ENCODE measurements at regions of chr7 and their contacts with region 1.

Region 1: DNA sequence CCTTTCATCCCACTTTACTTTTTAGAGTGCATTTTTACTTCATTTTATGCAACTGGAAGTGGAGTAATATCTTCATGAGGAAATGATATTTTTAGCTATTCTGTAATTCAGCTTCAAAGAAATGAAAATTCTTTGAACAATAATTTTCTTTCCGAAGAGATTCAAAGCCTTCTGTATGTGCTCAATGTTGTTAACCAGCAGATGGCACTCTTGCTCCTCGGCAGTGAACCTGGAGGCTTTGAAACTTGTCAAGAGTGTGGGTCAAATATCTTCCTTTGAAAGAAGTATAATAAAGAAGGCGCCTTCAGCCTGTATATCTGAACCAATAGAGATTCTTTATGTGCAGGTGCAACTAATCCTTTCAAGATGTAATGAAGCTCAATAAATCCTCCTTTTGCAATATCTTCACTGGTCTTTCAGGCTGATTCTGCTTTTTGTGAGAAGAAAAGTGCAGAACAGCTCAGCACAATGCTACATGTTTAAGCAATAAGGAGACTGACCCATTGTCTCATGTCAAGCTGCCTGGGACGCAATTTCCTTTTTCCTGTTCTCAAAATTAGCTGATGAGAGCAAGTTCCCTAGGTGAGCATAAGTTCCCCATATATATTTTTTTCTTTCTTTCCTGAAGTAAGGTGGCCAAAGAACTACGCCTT is 258.4 kb downstream of the SEMA3A start:
- DNase-seq: peak; percentile 58 to 81 (median 72)
- H3K4me3 ChIP-seq: no peak overlapping the region
- H3K27ac ChIP-seq: no peak overlapping the region
- H3K4me1 ChIP-seq: no peaks in the 10 kb centered on the region
- H3K27me3 ChIP-seq: no peaks in the 10 kb centered on the region

Region 2: DNA sequence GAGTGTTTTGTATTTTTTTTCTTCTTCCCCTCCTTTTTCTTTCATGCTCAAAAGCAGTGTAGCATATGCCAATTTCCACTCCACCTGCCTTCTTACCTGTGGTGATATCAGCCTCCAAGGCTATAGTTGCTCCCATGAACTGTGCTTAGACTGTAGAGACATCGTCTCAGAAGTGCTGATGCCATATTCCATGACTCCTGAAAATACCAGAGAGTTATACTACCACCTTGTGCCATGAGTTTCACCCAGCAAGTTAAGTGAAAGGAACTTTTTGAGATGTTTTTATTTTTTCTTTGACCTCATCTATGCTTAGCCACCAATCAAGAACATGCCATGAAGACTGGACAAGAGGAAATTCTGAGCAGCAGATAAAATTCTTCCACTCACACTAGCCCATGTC is 144.4 kb before region 1 on chr7:
- CTCF ChIA-PET with region 1: no interaction called
- POLR2A ChIA-PET with region 1: no interaction called
- DNase-seq: no peak
- H3K4me3 ChIP-seq: no peak overlapping the region
- H3K27ac ChIP-seq: no peak overlapping the region
- H3K4me1 ChIP-seq: no peaks in the 10 kb centered on the region
- H3K27me3 ChIP-seq: peaks cover 0 to 2% (median 0%) of the 10 kb centered on the region in 5 experiments

Region 3: DNA sequence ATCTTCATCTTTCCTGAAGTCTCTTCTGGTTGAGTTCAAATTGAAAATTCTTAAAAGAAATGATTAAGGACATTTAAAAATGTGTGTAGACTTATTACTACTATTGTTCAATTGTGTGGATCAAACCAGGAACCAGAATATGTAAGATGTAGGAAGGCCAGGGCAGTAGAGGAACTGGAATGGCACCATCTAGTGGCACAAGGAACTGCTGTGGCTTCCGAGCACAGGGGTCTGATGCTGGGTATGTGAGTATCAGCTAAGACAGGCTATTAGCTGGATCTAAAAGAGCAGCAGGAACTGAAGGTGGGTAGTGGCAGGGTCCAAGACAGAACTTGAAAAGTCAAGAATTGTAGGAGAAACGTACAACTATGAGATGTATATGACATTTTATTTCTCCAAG is 11.1 kb after region 1 on chr7:
- CTCF ChIA-PET with region 1: interaction called, 22 read pairs
- POLR2A ChIA-PET with region 1: no interaction called
- DNase-seq: peak; percentile 13 to 30 (median 22)
- H3K4me3 ChIP-seq: no peak overlapping the region
- H3K27ac ChIP-seq: no peak overlapping the region
- H3K4me1 ChIP-seq: no peaks in the 10 kb centered on the region
- H3K27me3 ChIP-seq: no peaks in the 10 kb centered on the region

Region 4: GRCh38 chr7:83957333-83957732 is 21.2 kb after region 1 on chr7:
- CTCF ChIA-PET with region 1: interaction called, 11 read pairs
- POLR2A ChIA-PET with region 1: no interaction called
- DNase-seq: peak; percentile 9 to 62 (median 54)
- H3K4me3 ChIP-seq: no peak overlapping the region
- H3K27ac ChIP-seq: no peak overlapping the region
- H3K4me1 ChIP-seq: no peaks in the 10 kb centered on the region
- H3K27me3 ChIP-seq: no peaks in the 10 kb centered on the region

Region 5: GRCh38 chr7:85023045-85023712 is 1087.0 kb after region 1 on chr7:
- CTCF ChIA-PET with region 1: interaction called, 34 read pairs
- POLR2A ChIA-PET with region 1: no interaction called
- DNase-seq: peak; percentile 35 to 66 (median 48)
- H3K4me3 ChIP-seq: no peak overlapping the region
- H3K27ac ChIP-seq: no peak overlapping the region
- H3K4me1 ChIP-seq: no peaks in the 10 kb centered on the region
- H3K27me3 ChIP-seq: no peaks in the 10 kb centered on the region

Region 6: DNA sequence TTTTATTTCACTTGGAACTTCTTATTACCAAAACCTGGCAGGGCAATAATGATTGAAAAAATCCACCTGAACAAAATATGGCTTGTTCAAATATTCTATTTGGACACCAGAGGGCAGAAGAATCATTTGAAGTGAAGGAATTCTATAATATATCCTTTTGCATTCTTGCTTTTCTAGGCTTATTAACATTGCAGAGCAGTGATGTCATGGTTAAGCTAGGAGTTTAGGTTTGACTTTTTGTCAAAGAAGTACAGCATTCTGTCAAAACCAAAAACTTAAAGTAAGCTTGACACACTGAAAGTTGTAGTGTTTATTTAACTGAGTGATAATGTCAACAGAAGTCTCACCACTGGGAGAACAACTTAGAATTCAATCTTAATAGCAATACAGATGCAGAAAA is 1094.7 kb after region 1 on chr7:
- CTCF ChIA-PET with region 1: interaction called, 34 read pairs
- POLR2A ChIA-PET with region 1: no interaction called
- DNase-seq: peak; percentile 31 to 54 (median 42)
- H3K4me3 ChIP-seq: no peak overlapping the region
- H3K27ac ChIP-seq: no peak overlapping the region
- H3K4me1 ChIP-seq: no peaks in the 10 kb centered on the region
- H3K27me3 ChIP-seq: no peaks in the 10 kb centered on the region